CD8-positive, alpha-beta T cell (primary cell): ENCODE measurements at regions of chr14 and their contacts with region 1.

Region 1: DNA sequence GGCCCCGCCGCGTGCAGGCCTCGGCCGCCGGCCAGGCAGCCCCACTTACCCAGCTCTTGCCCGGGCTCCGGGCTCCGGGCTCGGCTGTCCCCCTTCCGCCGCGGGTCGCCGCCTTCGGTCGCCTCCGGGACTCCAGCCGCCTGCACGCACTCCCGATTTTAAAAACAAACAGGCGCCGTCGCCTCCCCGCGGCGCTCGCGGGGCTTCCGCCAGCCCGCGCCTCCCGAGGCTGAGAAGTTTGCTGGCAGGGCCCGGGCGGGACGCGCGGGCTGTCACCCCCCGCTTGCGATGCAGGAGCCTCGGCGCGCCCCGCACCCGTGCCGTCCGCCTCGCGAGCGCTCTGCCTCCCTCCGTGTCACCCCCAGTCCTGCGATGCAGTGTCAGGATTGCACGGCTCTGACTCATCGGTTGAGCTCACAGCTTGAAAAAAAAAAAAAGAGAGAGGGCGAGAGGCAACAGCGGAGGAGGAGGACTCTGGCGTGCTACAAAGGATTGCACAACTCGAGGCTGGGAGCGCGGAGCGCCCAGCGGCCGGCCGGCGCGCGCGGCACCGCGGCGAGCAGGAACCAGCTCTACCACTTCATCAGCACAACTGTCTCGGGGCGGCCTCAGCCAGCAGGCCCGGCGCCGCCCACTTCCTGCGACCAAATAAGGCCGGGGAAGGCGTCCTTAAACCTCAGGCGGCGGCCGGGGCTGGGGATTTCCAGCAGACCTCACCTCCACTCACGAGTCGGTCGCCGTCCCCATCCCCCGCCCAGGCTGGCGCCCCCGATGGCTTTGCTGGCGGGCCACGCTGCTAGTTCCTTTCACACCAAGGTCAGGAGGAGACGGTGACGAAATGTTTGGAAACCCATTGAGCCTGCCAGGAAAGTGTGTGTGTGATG is 45.8 kb upstream of the PNMA1 start:
- DNase-seq: peak; percentile 92 to 99 (median 97)
- ATAC-seq: peak; percentile 73
- H3K4me3 ChIP-seq: peak overlapping the region; percentile 55 to 69
- H3K4me3 Mint-ChIP-seq: peak overlapping the region; percentile 92
- H3K27ac ChIP-seq: peak overlapping the region; percentile 82 to 94
- H3K27ac Mint-ChIP-seq: peak overlapping the region; percentile 99
- H3K4me1 ChIP-seq: peaks cover 76% of the 10 kb centered on the region
- H3K4me1 Mint-ChIP-seq: peaks cover 81% of the 10 kb centered on the region
- H3K27me3 ChIP-seq: no peaks in the 10 kb centered on the region
- H3K27me3 Mint-ChIP-seq: no peaks in the 10 kb centered on the region
- CTCF ChIP-seq: peak; percentile 16

Region 2: GRCh38 chr14:73125169-73125588 is 634.8 kb before region 1 on chr14:
- CTCF ChIA-PET with region 1: no interaction called
- POLR2A ChIA-PET with region 1: no interaction called
- intact Hi-C with region 1: no loop called
- DNase-seq: no peak
- ATAC-seq: no peak
- H3K4me3 ChIP-seq: no peak overlapping the region
- H3K4me3 Mint-ChIP-seq: no peak overlapping the region
- H3K27ac ChIP-seq: no peak overlapping the region
- H3K27ac Mint-ChIP-seq: no peak overlapping the region
- H3K4me1 ChIP-seq: no peaks in the 10 kb centered on the region
- H3K4me1 Mint-ChIP-seq: peaks cover 4% of the 10 kb centered on the region
- H3K27me3 ChIP-seq: no peaks in the 10 kb centered on the region
- H3K27me3 Mint-ChIP-seq: no peaks in the 10 kb centered on the region
- CTCF ChIP-seq: no peak

Region 3: DNA sequence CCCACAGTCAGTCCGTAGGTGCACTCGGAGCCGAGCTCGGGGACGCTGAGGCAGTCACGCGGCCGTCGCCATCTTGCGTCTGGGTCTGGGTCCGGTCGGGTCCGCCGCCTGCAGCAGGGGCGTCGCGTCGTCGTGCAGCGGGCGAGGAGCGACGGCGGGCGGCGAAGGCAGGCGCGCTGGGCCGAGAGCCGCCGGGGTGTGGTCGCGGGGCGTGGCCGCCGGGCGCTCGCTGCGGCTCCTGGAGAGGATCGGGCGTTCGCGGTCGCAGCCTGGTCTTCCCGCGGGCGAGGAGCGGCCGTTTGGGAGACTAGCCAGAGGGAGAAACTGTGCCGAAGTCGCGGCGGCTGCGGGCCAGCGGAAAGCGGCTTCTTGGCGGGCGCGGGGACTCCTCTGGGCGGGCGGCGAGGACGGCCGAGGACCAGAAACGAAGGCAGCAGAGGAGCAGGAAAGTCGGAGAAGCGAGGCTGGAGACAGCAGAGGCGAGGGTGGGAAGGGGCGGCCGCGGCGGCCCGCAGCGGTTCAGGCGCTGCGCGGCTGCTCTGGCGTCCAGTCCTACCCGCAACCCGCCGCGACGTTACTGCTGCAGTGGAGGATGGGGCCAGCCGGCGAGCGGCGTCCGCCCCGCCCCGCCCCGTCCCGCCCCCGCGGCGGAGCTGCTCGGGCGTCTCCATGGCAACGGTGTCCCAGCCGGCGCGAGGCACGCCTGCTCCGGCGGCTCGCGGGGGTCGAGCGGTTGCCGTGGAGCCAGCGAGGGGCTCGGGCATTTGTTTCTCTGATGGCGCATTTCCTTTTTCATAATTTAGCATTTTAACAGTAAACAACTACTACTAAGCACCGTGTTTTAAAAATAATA is 45.9 kb before region 1 on chr14 and contains the start of gene PNMA1:
- CTCF ChIA-PET with region 1: interaction called, 4 read pairs
- POLR2A ChIA-PET with region 1: interaction called, 14 read pairs
- intact Hi-C with region 1: loop called in 1 of 2 experiments (anchors 2 kb)
- DNase-seq: peak; percentile 67 to 94 (median 87)
- ATAC-seq: peak; percentile 72
- H3K4me3 ChIP-seq: peak within 1 kb of the TSS; percentile 71 to 92
- H3K4me3 Mint-ChIP-seq: peak within 1 kb of the TSS; percentile 92
- H3K27ac ChIP-seq: peak within 1 kb of the TSS; percentile 76 to 77
- H3K27ac Mint-ChIP-seq: peak within 1 kb of the TSS; percentile 96
- H3K4me1 ChIP-seq: peaks cover 10% of the 10 kb centered on the region
- H3K4me1 Mint-ChIP-seq: peaks cover 34% of the 10 kb centered on the region
- H3K27me3 ChIP-seq: no peaks in the 10 kb centered on the region
- H3K27me3 Mint-ChIP-seq: no peaks in the 10 kb centered on the region
- CTCF ChIP-seq: no peak
- total RNA-seq, gene PNMA1: 39.4 to 39.8 TPM

Region 4: DNA sequence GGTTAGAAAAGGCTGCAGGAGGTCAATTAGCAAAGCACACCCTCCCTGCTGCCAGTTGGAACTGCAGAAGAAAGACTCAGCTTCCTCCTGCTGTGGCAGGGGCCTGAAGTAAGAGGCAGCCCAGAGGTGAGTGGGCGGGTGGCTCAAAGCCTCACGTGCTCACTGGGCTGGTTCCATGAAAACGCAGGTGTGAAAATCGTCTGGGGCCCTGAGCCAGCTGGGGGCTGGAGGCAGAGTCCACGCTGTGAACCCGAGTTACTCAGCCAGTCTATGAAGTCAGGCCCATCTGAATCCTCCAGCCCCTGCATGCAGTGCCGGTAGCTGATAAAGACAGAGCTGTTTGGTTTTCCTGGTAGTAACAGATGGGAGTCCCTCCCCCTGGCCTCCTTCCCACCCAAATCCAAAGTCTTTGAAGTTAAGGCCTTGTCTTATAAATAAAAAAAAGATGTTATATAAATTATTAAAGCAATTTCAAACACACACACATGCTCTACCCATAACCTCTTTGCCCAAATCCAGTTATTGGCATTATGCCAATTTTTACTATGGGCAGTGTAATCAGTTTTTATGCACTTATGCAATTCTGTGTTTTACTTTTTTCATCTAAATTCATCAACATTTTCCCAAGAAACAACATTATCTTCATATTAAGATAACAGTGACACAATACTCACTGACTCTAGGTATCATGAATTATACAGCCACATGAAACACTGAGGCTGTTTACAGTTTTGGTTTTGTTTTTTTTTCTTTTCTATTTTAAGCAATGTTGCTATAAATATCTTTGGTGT is 12.1 kb after region 1 on chr14:
- CTCF ChIA-PET with region 1: interaction called, 21 read pairs
- POLR2A ChIA-PET with region 1: interaction called, 58 read pairs
- intact Hi-C with region 1: loop called (anchors 1 kb)
- DNase-seq: peak in 7 of 9 experiments; percentile 45 to 86 (median 74)
- ATAC-seq: peak; percentile 75
- H3K4me3 ChIP-seq: peak overlapping the region; percentile 1 to 38
- H3K4me3 Mint-ChIP-seq: peak overlapping the region; percentile 66
- H3K27ac ChIP-seq: peak overlapping the region; percentile 41 to 77
- H3K27ac Mint-ChIP-seq: peak overlapping the region; percentile 94
- H3K4me1 ChIP-seq: peaks cover 70% of the 10 kb centered on the region
- H3K4me1 Mint-ChIP-seq: peaks cover 74% of the 10 kb centered on the region
- H3K27me3 ChIP-seq: no peaks in the 10 kb centered on the region
- H3K27me3 Mint-ChIP-seq: no peaks in the 10 kb centered on the region
- CTCF ChIP-seq: no peak

Region 5: DNA sequence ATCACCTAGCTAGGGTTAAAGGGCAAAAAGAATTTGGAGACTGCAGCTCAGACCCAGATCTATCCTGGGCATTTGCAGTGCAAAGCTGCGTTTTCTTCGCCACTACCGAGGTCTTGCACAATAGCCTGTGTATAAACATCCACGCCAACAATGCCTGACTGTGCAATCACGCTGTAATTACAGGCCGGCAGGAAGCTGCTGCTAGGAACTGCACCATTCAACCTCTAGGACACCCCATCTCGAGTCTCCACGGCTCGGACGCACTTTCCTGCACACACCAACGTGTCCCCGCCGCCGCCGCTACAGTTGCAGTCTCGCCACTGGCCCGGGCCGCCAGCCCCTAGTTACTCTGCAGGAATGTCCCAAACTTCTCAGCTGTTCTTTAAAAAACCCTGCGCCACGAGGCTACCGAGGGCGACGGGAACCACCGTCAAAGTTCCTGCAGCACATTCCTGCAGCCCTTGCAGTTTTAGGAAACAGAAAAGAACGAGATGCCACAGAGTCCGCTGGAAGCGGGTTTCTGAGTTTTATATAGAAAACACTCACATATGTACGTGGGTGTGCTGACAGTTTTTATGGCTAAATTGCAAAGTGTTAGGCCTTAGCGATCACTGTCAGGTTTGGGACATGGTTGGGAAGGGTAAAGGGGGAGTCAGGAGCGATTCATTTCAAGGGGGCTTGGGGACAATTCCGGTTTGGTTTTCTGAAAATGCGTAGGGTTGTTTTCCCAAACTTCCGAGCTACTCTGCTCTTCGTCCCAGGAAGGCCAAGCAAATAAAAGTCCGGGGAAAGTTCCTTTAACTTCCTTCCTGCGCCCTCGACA is 26.1 kb after region 1 on chr14:
- CTCF ChIA-PET with region 1: interaction called, 61 read pairs
- POLR2A ChIA-PET with region 1: interaction called, 219 read pairs
- intact Hi-C with region 1: loop called (anchors 1 kb)
- DNase-seq: peak; percentile 32 to 82 (median 67)
- ATAC-seq: peak; percentile 62
- H3K4me3 ChIP-seq: peak overlapping the region; percentile 85 to 88
- H3K4me3 Mint-ChIP-seq: peak overlapping the region; percentile 95
- H3K27ac ChIP-seq: peak overlapping the region; percentile 83 to 89
- H3K27ac Mint-ChIP-seq: peak overlapping the region; percentile 94
- H3K4me1 ChIP-seq: peaks cover 57% of the 10 kb centered on the region
- H3K4me1 Mint-ChIP-seq: peaks cover 59% of the 10 kb centered on the region
- H3K27me3 ChIP-seq: no peaks in the 10 kb centered on the region
- H3K27me3 Mint-ChIP-seq: no peaks in the 10 kb centered on the region
- CTCF ChIP-seq: no peak

Region 6: GRCh38 chr14:73851644-73852382 is 91.9 kb after region 1 on chr14 and contains the start of gene PTGR2:
- CTCF ChIA-PET with region 1: interaction called, 11 read pairs
- POLR2A ChIA-PET with region 1: interaction called, 3 read pairs
- intact Hi-C with region 1: no loop called
- DNase-seq: peak; percentile 77 to 97 (median 89)
- ATAC-seq: peak; percentile 93
- H3K4me3 ChIP-seq: peak within 1 kb of the TSS; percentile 47 to 63
- H3K4me3 Mint-ChIP-seq: peak within 1 kb of the TSS; percentile 90
- H3K27ac ChIP-seq: peak within 1 kb of the TSS; percentile 70 to 81
- H3K27ac Mint-ChIP-seq: peak within 1 kb of the TSS; percentile 98
- H3K4me1 ChIP-seq: peaks cover 6% of the 10 kb centered on the region
- H3K4me1 Mint-ChIP-seq: peaks cover 21% of the 10 kb centered on the region
- H3K27me3 ChIP-seq: no peaks in the 10 kb centered on the region
- H3K27me3 Mint-ChIP-seq: no peaks in the 10 kb centered on the region
- CTCF ChIP-seq: no peak
- total RNA-seq, gene PTGR2: 1.2 to 1.4 TPM